Activated CD4-positive, alpha-beta T cell treated with anti-CD3 and anti-CD28 coated beads for 36 hours (primary cell): ENCODE measurements at regions of chr19 and their contacts with region 1.

Region 1: DNA sequence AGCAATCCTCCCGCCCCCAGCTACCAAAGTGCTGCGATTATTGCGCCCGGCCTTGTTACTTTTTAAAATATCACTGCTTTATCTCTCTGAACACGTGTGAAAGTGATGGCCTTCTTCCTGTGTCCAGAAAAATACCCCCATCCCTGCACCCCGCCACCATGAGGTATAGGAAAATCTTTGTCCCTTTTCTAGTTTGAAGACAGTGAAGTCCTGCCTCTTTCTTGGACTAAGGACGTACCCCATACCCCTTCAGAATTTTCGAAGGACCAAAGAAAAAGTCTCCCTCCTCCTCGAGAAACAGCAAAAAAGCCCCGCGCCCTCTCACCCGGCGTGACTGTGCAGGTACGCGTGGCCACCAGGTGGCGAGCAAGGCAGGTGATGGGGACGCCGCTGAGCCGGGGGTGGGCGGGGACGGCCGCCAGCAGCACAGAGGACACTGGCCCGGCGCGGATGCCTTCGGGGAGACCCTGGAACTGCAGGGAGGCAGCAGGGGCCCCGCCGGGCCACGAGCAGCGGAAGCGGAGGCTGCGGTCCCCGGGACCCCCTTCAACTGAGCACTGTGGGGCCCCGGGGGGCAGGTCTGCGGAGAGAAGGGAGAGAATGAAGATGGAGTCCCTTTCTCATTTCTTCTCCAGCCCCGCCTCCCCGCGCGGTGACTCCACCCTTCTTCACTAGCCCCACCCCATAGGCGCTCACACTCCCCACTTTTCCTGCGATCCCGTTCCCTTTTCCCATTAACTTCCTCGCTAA is 3.2 kb downstream of the VSIG10L start:
- DNase-seq: peak; percentile 96
- ATAC-seq: peak; percentile 73
- H3K4me3 Mint-ChIP-seq: peak overlapping the region; percentile 76
- H3K27ac Mint-ChIP-seq: peak overlapping the region; percentile 91
- H3K4me1 Mint-ChIP-seq: peaks cover 11% of the 10 kb centered on the region
- H3K27me3 Mint-ChIP-seq: no peaks in the 10 kb centered on the region

Region 2: DNA sequence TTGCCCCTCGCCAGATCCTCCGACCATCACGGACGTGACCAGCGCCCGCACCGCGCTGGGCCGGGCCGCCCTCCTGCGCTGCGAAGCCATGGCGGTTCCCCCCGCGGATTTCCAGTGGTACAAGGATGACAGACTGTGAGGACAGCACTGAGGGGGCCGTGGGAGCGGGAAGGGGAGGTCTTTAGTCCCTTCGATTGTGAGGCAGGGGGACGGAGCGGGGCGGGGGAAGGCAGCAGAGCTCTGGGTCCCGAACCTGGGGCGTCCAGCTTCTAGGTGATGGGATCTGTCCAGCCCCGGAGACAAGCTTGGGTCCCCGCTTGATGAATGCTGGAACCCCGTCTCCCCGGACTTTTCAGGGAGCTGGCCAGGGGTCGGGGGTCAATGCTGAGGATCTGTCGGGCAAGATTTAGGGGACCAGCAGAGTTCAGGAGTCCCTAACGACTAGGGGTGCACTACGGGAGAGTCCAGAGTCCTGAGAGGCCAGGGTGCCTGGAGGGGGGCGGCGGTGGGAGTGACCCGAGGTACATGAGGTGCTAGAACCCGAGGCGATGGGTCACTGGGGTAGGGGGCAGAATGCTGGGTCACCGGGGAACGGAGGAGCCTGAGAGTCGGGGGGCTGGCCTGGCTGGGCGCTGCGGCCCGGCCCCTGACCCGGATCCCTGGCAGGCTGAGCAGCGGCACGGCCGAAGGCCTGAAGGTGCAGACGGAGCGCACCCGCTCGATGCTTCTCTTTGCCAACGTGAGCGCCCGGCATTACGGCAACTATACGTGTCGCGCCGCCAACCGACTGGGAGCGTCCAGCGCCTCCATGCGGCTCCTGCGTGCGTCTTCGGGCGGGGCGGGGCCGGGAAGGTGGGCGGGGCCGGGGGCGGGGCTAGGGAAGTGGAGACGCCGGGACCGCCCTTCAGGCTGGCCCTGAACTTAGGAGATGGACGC is 11.4 kb before region 1 on chr19:
- CTCF ChIA-PET with region 1: interaction called, 3 read pairs
- POLR2A ChIA-PET with region 1: no interaction called
- intact Hi-C with region 1: loop called in 1 of 2 experiments (anchors 1 kb)
- DNase-seq: peak; percentile 87
- ATAC-seq: peak; percentile 93
- H3K4me3 Mint-ChIP-seq: peak overlapping the region; percentile 35
- H3K27ac Mint-ChIP-seq: no peak overlapping the region
- H3K4me1 Mint-ChIP-seq: peaks cover 8% of the 10 kb centered on the region
- H3K27me3 Mint-ChIP-seq: peaks cover 60% of the 10 kb centered on the region

Region 3: DNA sequence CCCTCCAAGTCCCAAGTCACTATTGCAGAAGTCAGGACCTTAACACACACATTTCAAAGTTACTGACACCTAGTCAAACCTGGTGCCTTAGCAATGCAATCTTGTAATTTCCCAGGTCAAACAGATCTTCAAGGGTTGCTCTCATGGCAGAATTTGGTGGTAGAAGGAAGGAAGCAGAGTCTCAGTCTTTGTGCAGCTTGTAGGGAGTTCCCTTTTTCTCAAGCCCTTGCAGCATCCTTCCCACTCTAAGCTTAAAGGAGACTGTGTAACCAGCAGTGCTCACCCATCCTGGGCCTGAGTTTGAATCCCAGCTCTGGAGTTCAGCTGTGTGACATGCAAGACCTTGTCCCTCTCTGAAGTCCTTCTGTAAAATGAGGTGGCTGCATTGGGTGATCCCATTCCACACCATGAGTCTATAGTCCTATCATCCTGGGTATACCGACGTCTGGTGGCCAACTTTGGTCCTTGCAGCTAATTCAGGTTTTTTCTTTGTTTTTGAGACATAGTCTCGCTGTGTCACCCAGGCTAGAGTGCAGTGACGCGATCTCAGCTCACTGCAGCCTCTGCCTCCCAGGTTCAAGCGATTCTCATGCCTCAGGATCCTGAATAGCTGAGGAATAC is 68.9 kb after region 1 on chr19:
- CTCF ChIA-PET with region 1: interaction called, 6 read pairs
- POLR2A ChIA-PET with region 1: no interaction called
- intact Hi-C with region 1: loop called in 1 of 2 experiments (anchors 1 kb)
- DNase-seq: peak; percentile 53
- ATAC-seq: peak; percentile 89
- H3K4me3 Mint-ChIP-seq: no peak overlapping the region
- H3K27ac Mint-ChIP-seq: no peak overlapping the region
- H3K4me1 Mint-ChIP-seq: peaks cover 4% of the 10 kb centered on the region
- H3K27me3 Mint-ChIP-seq: no peaks in the 10 kb centered on the region

Region 4: GRCh38 chr19:51493776-51494175 is 155.0 kb after region 1 on chr19:
- CTCF ChIA-PET with region 1: no interaction called
- POLR2A ChIA-PET with region 1: no interaction called
- intact Hi-C with region 1: no loop called
- DNase-seq: no peak
- ATAC-seq: no peak
- H3K4me3 Mint-ChIP-seq: no peak overlapping the region
- H3K27ac Mint-ChIP-seq: no peak overlapping the region
- H3K4me1 Mint-ChIP-seq: peaks cover 24% of the 10 kb centered on the region
- H3K27me3 Mint-ChIP-seq: peaks cover 18% of the 10 kb centered on the region

Region 5: DNA sequence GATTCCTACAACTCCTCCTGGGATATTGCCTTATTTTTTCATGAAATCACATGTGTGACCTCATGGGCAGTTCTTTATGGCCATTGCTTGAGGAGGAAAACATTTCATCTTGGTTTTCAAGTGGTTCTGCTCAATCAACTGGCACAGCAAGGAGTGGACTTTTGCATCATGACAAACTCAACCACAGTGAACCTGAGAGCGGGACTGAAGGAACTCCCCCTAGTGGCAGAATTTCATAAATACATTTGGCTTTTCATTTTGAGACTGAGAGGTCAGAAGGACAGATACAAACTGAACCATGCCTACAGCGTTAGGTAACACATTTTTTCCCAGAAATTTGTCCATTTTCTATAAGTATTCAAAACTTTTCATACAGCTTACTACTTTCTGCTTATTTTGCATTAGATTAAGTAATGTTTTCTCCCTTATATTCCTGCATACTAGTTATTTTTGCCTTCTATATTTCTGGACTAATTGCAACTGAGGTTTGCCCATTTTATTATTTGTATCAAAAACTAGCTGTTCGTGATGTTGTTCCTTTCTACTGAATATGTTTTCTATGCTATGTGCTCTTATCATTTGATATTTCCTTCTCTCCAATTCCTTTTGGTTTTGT is 176.2 kb after region 1 on chr19:
- CTCF ChIA-PET with region 1: interaction called, 3 read pairs
- POLR2A ChIA-PET with region 1: no interaction called
- intact Hi-C with region 1: loop called in 1 of 2 experiments (anchors 10 kb)
- DNase-seq: peak; percentile 41
- ATAC-seq: peak; percentile 73
- H3K4me3 Mint-ChIP-seq: no peak overlapping the region
- H3K27ac Mint-ChIP-seq: no peak overlapping the region
- H3K4me1 Mint-ChIP-seq: peaks cover 19% of the 10 kb centered on the region
- H3K27me3 Mint-ChIP-seq: peaks cover 17% of the 10 kb centered on the region

Region 6: GRCh38 chr19:51660975-51661600 is 322.4 kb after region 1 on chr19:
- CTCF ChIA-PET with region 1: interaction called, 16 read pairs
- POLR2A ChIA-PET with region 1: no interaction called
- intact Hi-C with region 1: loop called (anchors 1 to 2 kb)
- DNase-seq: peak; percentile 86
- ATAC-seq: peak; percentile 66
- H3K4me3 Mint-ChIP-seq: no peak overlapping the region
- H3K27ac Mint-ChIP-seq: no peak overlapping the region
- H3K4me1 Mint-ChIP-seq: peaks cover 5% of the 10 kb centered on the region
- H3K27me3 Mint-ChIP-seq: peaks cover 28% of the 10 kb centered on the region

Region 7: DNA sequence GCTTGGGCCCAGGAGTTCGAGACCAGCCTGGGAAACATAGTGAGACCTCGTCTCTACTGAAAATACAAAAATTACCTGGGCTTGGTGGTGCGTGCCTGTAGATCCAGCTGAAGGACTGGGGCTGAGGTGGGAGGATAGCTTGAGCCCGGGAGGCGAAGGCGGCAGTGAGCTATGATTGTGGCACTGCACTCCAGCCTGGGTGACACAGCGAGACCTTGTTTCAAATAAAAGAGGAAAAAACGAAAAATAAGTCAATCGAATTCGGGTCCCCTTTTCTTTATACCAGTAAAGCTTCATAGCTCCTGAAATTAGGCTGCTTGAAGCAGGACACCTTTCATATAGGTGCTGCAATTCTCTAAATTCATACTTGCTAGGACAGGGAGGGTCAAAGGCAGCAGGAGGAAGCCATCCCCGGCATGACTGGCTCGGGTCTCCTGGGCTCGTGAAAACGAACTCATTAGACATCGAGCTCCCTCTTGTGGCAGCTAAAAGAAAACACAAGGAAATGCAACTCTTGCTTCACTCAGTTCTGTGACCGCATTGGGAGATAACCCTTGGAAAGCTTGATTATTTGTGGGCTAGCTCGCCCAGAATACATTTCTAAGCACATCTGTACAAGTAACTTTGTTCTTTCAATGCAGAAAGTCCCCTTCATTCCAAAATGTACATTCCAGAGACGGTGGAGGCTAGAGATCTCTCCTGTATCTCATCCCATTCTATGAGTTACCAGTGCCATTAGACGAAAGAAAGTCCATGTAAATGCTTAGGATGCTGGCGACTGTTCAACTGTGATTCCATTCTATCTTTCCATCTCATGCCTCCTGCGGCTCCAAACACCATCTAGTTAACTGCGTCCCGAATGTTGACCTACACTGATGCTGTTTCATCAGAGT is 439.1 kb after region 1 on chr19:
- CTCF ChIA-PET with region 1: no interaction called
- POLR2A ChIA-PET with region 1: no interaction called
- intact Hi-C with region 1: loop called in 1 of 2 experiments (anchors 5 kb)
- DNase-seq: peak; percentile 66
- ATAC-seq: peak; percentile 74
- H3K4me3 Mint-ChIP-seq: no peak overlapping the region
- H3K27ac Mint-ChIP-seq: no peak overlapping the region
- H3K4me1 Mint-ChIP-seq: peaks cover 6% of the 10 kb centered on the region
- H3K27me3 Mint-ChIP-seq: peaks cover 57% of the 10 kb centered on the region